ENCODE measurements at regions of chr3 and their contacts with region 1.

Region 1: DNA sequence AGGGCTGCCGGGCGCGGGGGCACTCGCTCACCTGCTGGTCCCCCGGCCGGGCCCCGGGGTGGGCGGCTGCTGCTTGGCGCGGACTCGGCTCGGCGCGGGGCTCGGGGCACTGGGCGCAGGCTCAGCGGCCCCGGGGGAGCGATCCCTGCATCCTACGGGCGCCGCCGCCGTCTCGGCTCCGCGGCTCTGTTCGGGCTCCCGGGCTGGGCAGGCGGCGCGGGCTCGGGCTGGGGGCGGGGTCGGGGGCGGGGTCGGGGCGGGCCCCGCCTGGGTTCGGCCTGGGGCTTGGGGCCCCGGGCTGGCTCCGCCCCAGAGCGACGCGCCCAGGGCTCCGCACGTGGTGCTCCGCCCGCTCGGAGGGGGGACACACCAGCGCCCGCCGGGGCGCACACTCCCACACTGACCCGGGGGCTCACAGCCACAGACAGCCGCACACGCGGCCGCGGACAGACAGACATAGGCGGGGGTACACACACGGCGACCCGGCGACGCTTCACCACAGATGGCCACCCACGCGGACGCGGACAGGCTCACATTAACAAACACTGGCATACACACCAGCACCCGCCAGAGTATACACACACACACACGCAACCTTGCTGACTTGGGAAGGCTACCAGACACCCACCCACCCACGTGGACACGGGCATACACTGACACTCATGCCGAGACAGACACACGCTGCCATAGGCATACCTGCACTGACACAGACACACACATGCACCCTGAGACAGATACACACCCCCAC is at the start of gene SCN5A:
- DNase-seq: peak in 3 of 4 donors; percentile 43 to 88 (median 77)
- ATAC-seq: peak; percentile 90
- H3K4me3 ChIP-seq: peak within 1 kb of the TSS; percentile 22 to 27
- H3K27ac ChIP-seq: no peak within 1 kb of the TSS
- H3K4me1 ChIP-seq: peaks cover 5 to 23% of the 10 kb centered on the region in 2 donors
- H3K27me3 ChIP-seq: peaks cover 30 to 98% of the 10 kb centered on the region in 2 donors
- CTCF ChIP-seq: no peak
- polyA plus RNA-seq, gene SCN5A: 0.54 to 0.97 (median 0.83) TPM

Region 2: DNA sequence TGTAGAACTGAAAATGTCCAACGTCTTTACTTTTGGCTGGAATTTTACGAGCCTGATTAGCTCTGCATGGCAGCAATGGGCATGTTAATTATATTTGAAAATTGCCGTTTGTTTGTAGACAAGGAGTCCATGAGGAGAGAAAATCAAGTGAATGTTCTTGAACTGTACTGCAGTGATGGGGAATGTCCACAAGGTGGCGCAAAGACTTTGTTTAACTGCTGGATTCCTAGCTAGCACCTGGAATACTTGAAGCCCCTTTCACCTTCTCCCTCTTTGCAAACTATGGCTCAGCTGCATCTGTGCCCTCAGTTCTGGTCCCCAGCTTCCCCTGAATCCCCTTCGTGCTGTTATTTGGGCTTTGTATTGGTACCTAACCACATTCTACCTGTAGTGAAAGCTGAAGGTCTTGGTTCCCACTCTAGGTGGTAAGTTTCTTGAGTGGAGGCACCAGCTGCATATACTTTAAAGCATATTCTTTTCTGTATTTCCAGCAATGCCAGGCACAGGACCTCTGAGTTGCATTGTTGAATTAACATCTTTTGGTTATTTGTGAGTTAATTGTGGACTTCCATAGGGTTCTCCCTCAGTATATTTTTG is 128.2 kb before region 1 on chr3:
- intact Hi-C with region 1: loop called in 1 of 2 experiments (anchors 5 kb)
- DNase-seq: peak in 3 of 4 donors; percentile 37 to 71 (median 45)
- ATAC-seq: peak; percentile 83
- H3K4me3 ChIP-seq: no peak overlapping the region
- H3K27ac ChIP-seq: no peak overlapping the region
- H3K4me1 ChIP-seq: no peaks in the 10 kb centered on the region
- H3K27me3 ChIP-seq: no peaks in the 10 kb centered on the region
- CTCF ChIP-seq: peak; percentile 86 to 91

Region 3: GRCh38 chr3:38689774-38690173 is 40.1 kb after region 1 on chr3:
- intact Hi-C with region 1: no loop called
- DNase-seq: no peak
- ATAC-seq: no peak
- H3K4me3 ChIP-seq: no peak overlapping the region
- H3K27ac ChIP-seq: no peak overlapping the region
- H3K4me1 ChIP-seq: no peaks in the 10 kb centered on the region
- H3K27me3 ChIP-seq: no peaks in the 10 kb centered on the region
- CTCF ChIP-seq: no peak